Activated CD4-positive, alpha-beta memory T cell treated with anti-CD3 and anti-CD28 coated beads for 36 hours (primary cell): ENCODE measurements at regions of chr21 and their contacts with region 1.

Region 1: GRCh38 chr21:43728467-43729390 is 9.8 kb downstream of the PDXK start:
- DNase-seq: peak; percentile 90
- H3K4me3 Mint-ChIP-seq: peak overlapping the region; percentile 78
- H3K27ac Mint-ChIP-seq: peak overlapping the region; percentile 83
- H3K4me1 Mint-ChIP-seq: peaks cover 56% of the 10 kb centered on the region
- H3K27me3 Mint-ChIP-seq: no peaks in the 10 kb centered on the region

Region 2: GRCh38 chr21:43758111-43758641 is 29.4 kb after region 1 on chr21:
- CTCF ChIA-PET with region 1: no interaction called
- POLR2A ChIA-PET with region 1: no interaction called
- intact Hi-C with region 1: no loop called
- DNase-seq: no peak
- H3K4me3 Mint-ChIP-seq: no peak overlapping the region
- H3K27ac Mint-ChIP-seq: no peak overlapping the region
- H3K4me1 Mint-ChIP-seq: no peaks in the 10 kb centered on the region
- H3K27me3 Mint-ChIP-seq: no peaks in the 10 kb centered on the region

Region 3: GRCh38 chr21:43775795-43776430 is 47.2 kb after region 1 on chr21 and contains the start of gene CSTB:
- CTCF ChIA-PET with region 1: interaction called, 3 read pairs
- POLR2A ChIA-PET with region 1: interaction called, 3 read pairs
- intact Hi-C with region 1: loop called (anchors 5 kb)
- DNase-seq: peak; percentile 89
- H3K4me3 Mint-ChIP-seq: peak within 1 kb of the TSS; percentile 89
- H3K27ac Mint-ChIP-seq: peak within 1 kb of the TSS; percentile 70
- H3K4me1 Mint-ChIP-seq: peaks cover 38% of the 10 kb centered on the region
- H3K27me3 Mint-ChIP-seq: no peaks in the 10 kb centered on the region
- total RNA-seq, gene CSTB: 40.1 to 42.3 TPM

Region 4: DNA sequence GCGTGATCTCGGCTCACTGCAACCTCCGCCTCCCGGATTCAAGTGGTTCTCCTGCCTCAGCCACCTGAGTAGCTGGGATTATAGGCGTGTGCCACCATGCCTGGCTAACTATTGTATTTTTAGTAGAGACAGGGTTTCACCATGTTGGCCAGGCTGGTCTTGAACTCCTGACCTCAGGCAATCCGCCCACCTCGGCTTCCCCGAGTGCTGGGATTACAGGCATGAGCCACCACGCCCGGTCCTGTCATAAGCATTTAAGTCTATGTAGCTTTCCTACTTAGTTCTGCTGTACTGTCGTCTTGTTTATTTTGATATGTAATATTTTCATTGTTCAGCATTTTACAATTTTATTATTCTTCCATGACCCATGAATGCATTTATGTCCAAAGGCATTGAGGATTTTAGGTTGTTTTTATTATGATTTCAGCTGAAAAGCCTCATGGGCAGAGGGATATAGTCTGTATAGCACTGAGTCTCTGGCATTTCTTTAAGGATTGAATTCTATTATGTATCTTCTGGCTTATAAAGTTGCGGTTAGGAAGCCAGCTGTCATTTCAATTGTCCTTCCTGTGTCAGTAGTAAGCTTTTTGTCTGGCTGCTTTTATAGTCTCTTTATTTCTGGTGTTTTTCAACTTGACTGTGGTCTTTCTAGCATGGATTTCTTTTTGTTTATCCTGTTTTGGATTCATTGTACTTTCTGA is 145.5 kb after region 1 on chr21:
- CTCF ChIA-PET with region 1: no interaction called
- POLR2A ChIA-PET with region 1: no interaction called
- intact Hi-C with region 1: no loop called
- DNase-seq: no peak
- H3K4me3 Mint-ChIP-seq: no peak overlapping the region
- H3K27ac Mint-ChIP-seq: peak overlapping the region; percentile 11
- H3K4me1 Mint-ChIP-seq: peaks cover 56% of the 10 kb centered on the region
- H3K27me3 Mint-ChIP-seq: no peaks in the 10 kb centered on the region